Vagina (tissue), 2 donors: ENCODE measurements at regions of chr9 and their contacts with region 1.

Region 1: GRCh38 chr9:10274988-10275387 is 337.8 kb downstream of the PTPRD start:
- DNase-seq: no peak
- H3K4me3 ChIP-seq: no peak overlapping the region
- H3K27ac ChIP-seq: no peak overlapping the region
- H3K4me1 ChIP-seq: no peaks in the 10 kb centered on the region
- H3K27me3 ChIP-seq: no peaks in the 10 kb centered on the region
- CTCF ChIP-seq: no peak
- POLR2A ChIP-seq: no peak

Region 2: GRCh38 chr9:10252174-10252573 is 22.8 kb before region 1 on chr9:
- intact Hi-C with region 1: loop called (anchors 1 kb)
- DNase-seq: no peak
- H3K4me3 ChIP-seq: no peak overlapping the region
- H3K27ac ChIP-seq: no peak overlapping the region
- H3K4me1 ChIP-seq: no peaks in the 10 kb centered on the region
- H3K27me3 ChIP-seq: no peaks in the 10 kb centered on the region
- CTCF ChIP-seq: no peak
- POLR2A ChIP-seq: no peak